ENCODE measurements at regions of chr20 and their contacts with region 1.

Region 1: DNA sequence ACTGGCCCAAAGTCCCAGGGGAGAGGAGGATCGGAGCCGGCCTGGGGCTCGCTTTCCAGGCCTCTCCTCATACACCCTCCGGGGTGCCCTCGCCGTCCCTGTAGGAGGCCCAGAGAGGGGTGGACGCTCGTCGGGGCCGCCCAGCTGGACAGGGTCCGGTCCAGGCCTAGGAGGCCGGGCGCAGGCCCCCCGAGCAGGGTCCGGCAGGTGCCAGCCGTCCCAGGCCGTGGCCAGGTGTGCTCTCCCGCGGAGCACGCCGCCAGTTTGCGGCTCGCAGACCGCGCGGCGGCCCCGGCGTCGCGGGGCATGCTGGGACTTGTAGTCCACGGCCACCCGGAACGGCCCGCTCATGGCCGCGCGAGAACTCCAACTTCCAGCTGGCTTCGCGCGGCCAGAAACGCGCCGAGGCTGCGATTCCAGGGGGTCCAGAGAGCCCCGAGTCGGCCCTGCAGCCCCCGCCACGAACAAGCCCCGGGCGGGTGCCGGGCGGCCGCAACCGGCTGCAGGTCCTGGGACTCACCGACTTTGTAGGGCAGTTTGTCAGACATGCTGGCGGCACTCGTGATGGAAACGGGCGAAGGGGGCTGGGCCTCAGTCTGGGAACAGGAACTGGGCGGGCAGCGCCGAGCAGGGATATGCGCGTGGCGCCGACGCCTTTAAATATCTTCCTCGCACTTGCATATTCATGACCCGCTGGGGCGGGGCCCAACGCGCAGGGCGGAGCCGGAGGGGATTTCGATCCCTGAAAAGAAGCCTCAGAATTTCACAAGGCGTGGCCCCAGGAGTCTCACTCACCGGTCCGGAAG is at the start of gene AHCY:
- DNase-seq: peak; percentile 90
- ATAC-seq: peak; percentile 91
- H3K4me3 Mint-ChIP-seq: peak within 1 kb of the TSS; percentile 94
- H3K27ac Mint-ChIP-seq: peak within 1 kb of the TSS; percentile 93
- H3K4me1 Mint-ChIP-seq: peaks cover 22% of the 10 kb centered on the region
- H3K27me3 Mint-ChIP-seq: no peaks in the 10 kb centered on the region
- CTCF ChIP-seq: no peak
- total RNA-seq, gene AHCY: 77.9 and 83.5 TPM in 2 replicates

Region 2: DNA sequence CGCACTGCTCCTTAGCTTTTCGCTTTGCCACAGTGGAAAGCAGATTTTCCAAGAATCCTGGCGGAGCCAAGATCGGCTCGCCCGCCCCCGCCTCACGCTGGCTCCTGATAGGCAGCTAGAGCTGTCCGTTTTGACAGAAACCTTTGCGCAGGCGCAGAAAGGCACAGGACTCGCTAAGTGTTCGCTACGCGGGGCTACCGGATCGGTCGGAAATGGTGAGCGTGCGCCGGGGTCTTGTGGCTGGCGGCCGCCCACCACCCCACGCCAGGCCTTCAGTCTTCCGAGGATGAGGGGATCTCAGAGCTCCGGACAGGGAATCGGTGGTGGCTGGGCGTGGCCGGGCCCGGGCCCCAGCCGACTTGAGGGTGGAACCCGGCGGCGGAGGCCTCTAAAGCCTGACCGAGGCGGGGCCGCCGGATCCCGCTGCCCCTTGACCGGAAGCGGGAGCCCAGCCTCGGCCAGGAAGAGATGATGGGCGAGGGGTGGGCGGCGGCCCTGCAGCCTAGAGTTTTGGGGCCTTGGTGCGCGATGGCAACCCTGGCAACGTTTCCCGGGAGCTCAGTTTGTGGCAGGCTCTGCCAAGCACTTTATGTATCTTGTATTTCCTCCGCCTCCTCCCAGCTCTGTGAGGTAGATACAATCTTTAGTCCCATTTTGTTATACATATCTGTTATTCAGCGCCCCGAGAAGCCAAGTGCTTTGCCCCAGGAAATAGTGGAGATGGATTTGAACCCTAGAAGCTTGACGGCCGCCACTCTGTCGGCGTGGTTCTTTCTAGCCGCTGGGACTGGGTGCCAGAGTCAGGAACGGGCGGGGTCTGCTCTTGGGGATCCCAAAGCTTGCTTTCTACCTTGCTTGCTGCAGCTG is 213.6 kb after region 1 on chr20 and contains the start of gene DYNLRB1:
- CTCF ChIA-PET with region 1: interaction called, 3 read pairs
- POLR2A ChIA-PET with region 1: interaction called, 16 read pairs
- intact Hi-C with region 1: loop called (anchors 1 kb)
- DNase-seq: peak; percentile 88
- ATAC-seq: peak; percentile 82
- H3K4me3 Mint-ChIP-seq: peak within 1 kb of the TSS; percentile 98
- H3K27ac Mint-ChIP-seq: peak within 1 kb of the TSS; percentile 96
- H3K4me1 Mint-ChIP-seq: peaks cover 48% of the 10 kb centered on the region
- H3K27me3 Mint-ChIP-seq: no peaks in the 10 kb centered on the region
- CTCF ChIP-seq: no peak
- total RNA-seq, gene DYNLRB1: 62.7 and 65.9 TPM in 2 replicates

Region 3: GRCh38 chr20:34676642-34677373 is 373.9 kb after region 1 on chr20 and contains the start of gene PIGU:
- CTCF ChIA-PET with region 1: no interaction called
- POLR2A ChIA-PET with region 1: interaction called, 5 read pairs
- intact Hi-C with region 1: loop called (anchors 1 kb)
- DNase-seq: peak; percentile 91
- ATAC-seq: peak; percentile 94
- H3K4me3 Mint-ChIP-seq: peak within 1 kb of the TSS; percentile 98
- H3K27ac Mint-ChIP-seq: peak within 1 kb of the TSS; percentile 95
- H3K4me1 Mint-ChIP-seq: peaks cover 15% of the 10 kb centered on the region
- H3K27me3 Mint-ChIP-seq: no peaks in the 10 kb centered on the region
- CTCF ChIP-seq: no peak
- total RNA-seq, gene PIGU: 14.7 and 15.3 TPM in 2 replicates

Region 4: GRCh38 chr20:34825530-34826362 is 522.8 kb after region 1 on chr20 and contains the start of gene NCOA6:
- CTCF ChIA-PET with region 1: no interaction called
- POLR2A ChIA-PET with region 1: no interaction called
- intact Hi-C with region 1: loop called (anchors 2 kb)
- DNase-seq: peak; percentile 78
- ATAC-seq: peak; percentile 74
- H3K4me3 Mint-ChIP-seq: peak within 1 kb of the TSS; percentile 97
- H3K27ac Mint-ChIP-seq: peak within 1 kb of the TSS; percentile 90
- H3K4me1 Mint-ChIP-seq: peaks cover 41% of the 10 kb centered on the region
- H3K27me3 Mint-ChIP-seq: no peaks in the 10 kb centered on the region
- CTCF ChIP-seq: no peak
- total RNA-seq, gene NCOA6: 23.7 and 24.0 TPM in 2 replicates

Region 5: DNA sequence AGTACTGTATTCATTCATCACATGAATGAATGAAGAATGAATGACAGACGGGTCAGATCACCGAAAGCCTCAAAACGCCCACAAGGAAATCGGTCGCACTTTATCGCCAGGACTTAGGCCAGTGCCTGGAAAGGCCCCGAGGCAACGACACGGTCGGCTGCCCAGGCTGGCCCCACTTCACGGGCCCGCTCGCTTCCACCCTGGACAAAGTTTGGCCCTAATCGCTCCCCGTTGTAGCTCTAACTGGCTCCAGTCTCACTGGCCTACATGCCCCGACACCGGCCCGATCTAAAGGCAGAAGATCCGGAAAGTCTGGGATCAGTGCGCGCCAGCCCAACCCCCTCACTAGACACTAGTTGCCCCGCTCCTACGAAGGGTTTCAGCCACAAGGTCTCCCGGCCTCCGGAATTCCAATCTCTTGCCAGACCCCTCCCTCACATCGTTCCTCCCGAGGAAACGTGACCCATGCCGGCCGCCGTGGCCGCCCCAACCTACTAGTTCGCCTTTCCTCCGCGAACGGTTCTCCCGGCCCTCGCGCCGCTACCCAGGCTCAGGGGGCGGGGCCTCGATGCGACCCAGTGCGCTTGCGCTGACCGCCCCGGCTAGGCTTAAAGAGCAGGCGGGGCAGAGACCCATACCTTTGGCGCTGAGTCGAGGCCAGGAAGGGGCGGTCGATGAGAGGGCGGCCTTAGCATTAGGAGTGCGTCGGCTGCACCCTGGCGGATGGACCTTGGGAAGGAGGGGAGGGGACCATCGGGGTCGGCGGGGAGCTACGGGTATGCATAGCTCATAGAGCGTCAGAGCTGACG is 652.5 kb after region 1 on chr20 and contains the starts of genes GSS and MYH7B:
- CTCF ChIA-PET with region 1: no interaction called
- POLR2A ChIA-PET with region 1: no interaction called
- intact Hi-C with region 1: loop called (anchors 2 kb)
- DNase-seq: peak; percentile 98
- ATAC-seq: peak; percentile 95
- H3K4me3 Mint-ChIP-seq: peak within 1 kb of the TSS; percentile 97
- H3K27ac Mint-ChIP-seq: peak within 1 kb of the TSS; percentile 83
- H3K4me1 Mint-ChIP-seq: peaks cover 26% of the 10 kb centered on the region
- H3K27me3 Mint-ChIP-seq: no peaks in the 10 kb centered on the region
- CTCF ChIP-seq: no peak
- total RNA-seq, gene GSS: 26.1 and 27.5 TPM in 2 replicates
- total RNA-seq, gene MYH7B: 0.20 and 0.35 TPM in 2 replicates

Region 6: GRCh38 chr20:35079472-35080347 is 776.8 kb after region 1 on chr20:
- CTCF ChIA-PET with region 1: no interaction called
- POLR2A ChIA-PET with region 1: interaction called, 11 read pairs
- intact Hi-C with region 1: no loop called
- DNase-seq: no peak
- ATAC-seq: no peak
- H3K4me3 Mint-ChIP-seq: no peak overlapping the region
- H3K27ac Mint-ChIP-seq: no peak overlapping the region
- H3K4me1 Mint-ChIP-seq: peaks cover 20% of the 10 kb centered on the region
- H3K27me3 Mint-ChIP-seq: no peaks in the 10 kb centered on the region
- CTCF ChIP-seq: no peak

Measured in activated B cell treated with CpG ODN at 0.5 μM for 24 hours (primary cell).